Activated CD4-positive, alpha-beta T cell treated with anti-CD3 and anti-CD28 coated beads for 36 hours (primary cell): ENCODE measurements at regions of chr6 and their contacts with region 1.

Region 1: GRCh38 chr6:135753196-135753595 is 98.3 kb upstream of the PDE7B start:
- DNase-seq: no peak
- ATAC-seq: no peak
- H3K4me3 Mint-ChIP-seq: no peak overlapping the region
- H3K27ac Mint-ChIP-seq: no peak overlapping the region
- H3K4me1 Mint-ChIP-seq: no peaks in the 10 kb centered on the region
- H3K27me3 Mint-ChIP-seq: peaks cover 2% of the 10 kb centered on the region

Region 2: GRCh38 chr6:135739288-135739687 is 13.9 kb before region 1 on chr6:
- CTCF ChIA-PET with region 1: interaction called, 11 read pairs
- POLR2A ChIA-PET with region 1: no interaction called
- intact Hi-C with region 1: no loop called
- DNase-seq: peak; percentile 4
- ATAC-seq: no peak
- H3K4me3 Mint-ChIP-seq: no peak overlapping the region
- H3K27ac Mint-ChIP-seq: no peak overlapping the region
- H3K4me1 Mint-ChIP-seq: peaks cover 4% of the 10 kb centered on the region
- H3K27me3 Mint-ChIP-seq: peaks cover 2% of the 10 kb centered on the region

Region 3: GRCh38 chr6:136095986-136096385 is 342.8 kb after region 1 on chr6:
- CTCF ChIA-PET with region 1: no interaction called
- POLR2A ChIA-PET with region 1: no interaction called
- intact Hi-C with region 1: no loop called
- DNase-seq: no peak
- ATAC-seq: no peak
- H3K4me3 Mint-ChIP-seq: no peak overlapping the region
- H3K27ac Mint-ChIP-seq: no peak overlapping the region
- H3K4me1 Mint-ChIP-seq: no peaks in the 10 kb centered on the region
- H3K27me3 Mint-ChIP-seq: peaks cover 3% of the 10 kb centered on the region